ENCODE measurements at regions of chr6 and their contacts with region 1.

Region 1: DNA sequence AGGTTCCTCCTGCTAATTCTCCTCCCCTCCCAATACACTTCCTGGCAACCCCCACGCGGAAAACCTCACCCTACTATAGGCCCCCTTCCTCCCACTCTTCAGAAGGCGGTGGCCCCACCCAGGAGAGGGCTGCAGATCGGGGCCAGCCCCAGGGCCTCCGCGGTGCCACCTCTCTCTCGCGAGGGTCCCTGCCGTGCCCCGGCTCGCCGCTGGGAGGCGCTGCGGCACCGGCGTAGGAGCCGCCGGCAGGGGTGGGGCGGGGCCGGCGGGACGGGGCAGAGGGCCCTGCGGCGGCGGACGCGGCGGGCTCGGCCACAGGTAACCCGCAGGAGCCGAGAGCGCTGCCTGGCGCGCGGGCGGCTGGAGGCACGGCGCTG is at the start of gene ANKRD6:
- DNase-seq: peak; percentile 93
- H3K4me3 Mint-ChIP-seq: peak within 1 kb of the TSS; percentile 77
- H3K27ac Mint-ChIP-seq: no peak within 1 kb of the TSS
- H3K4me1 Mint-ChIP-seq: peaks cover 17% of the 10 kb centered on the region
- H3K27me3 Mint-ChIP-seq: peaks cover 10% of the 10 kb centered on the region
- CTCF ChIP-seq: peak; percentile 93
- total RNA-seq, gene ANKRD6: 14.7 and 18.0 TPM in 2 replicates

Region 2: DNA sequence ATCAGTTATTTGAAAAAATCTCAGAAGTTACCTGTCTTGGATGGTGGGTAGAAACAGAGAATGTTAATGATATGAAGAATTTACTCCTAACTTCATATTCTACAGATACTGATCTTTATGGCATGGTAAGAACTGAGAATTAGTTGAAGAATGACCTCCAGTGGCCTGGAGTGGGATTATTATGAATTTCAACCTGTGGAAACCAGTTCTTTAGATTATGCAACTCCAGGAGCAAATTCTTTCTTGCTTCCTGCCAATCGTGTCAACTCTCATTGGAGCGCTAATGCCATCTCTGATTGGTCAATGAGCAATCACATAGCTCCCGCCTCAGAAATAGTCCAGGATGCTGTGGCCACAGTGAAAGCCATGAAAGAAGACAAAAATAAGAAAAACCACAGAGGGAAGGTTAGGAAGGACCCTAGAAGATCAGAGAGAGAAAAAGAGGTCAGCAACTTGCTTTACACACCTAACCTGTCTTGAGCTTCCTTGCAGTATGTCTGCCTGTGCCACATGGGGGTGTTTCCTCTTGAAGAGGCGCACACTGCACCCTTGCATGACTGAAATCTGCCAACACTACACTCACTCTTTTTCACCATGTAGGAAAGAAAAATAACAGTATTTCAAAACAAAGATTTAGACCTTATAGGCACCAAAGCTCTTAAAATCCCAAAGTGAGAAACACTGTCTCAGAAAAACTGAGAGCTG is 165.3 kb after region 1 on chr6:
- CTCF ChIA-PET with region 1: interaction called, 5 read pairs
- intact Hi-C with region 1: loop called (anchors 5 kb)
- DNase-seq: peak; percentile 49
- H3K4me3 Mint-ChIP-seq: peak overlapping the region; percentile 5
- H3K27ac Mint-ChIP-seq: peak overlapping the region; percentile 14
- H3K4me1 Mint-ChIP-seq: no peaks in the 10 kb centered on the region
- H3K27me3 Mint-ChIP-seq: no peaks in the 10 kb centered on the region
- CTCF ChIP-seq: no peak

Region 3: DNA sequence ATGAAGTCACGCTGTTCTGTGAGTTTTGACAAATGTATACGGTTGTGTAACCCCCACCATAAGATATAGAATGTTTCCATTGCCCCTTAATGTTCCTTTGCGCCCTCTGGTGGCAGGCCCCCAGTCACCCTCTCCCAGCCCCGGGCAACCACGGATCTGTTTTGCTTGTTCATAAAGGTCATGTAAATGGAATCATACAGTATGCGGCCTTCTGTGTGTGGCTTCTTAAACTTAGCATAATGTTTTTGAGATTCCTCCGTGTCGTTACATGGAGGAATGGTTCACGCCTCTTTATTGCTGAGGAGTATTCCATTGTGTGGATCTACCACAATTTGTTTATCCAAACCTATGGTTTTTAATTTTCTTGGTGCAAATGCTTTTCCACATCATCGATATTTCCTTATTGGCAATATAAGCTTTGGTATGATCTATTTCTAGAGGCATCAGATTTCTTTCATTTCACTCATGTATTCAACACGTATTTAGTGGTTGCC is 177.3 kb after region 1 on chr6:
- CTCF ChIA-PET with region 1: interaction called, 7 read pairs
- intact Hi-C with region 1: loop called (anchors 1 kb)
- DNase-seq: peak; percentile 85
- H3K4me3 Mint-ChIP-seq: no peak overlapping the region
- H3K27ac Mint-ChIP-seq: no peak overlapping the region
- H3K4me1 Mint-ChIP-seq: no peaks in the 10 kb centered on the region
- H3K27me3 Mint-ChIP-seq: no peaks in the 10 kb centered on the region
- CTCF ChIP-seq: peak; percentile 73

Region 4: DNA sequence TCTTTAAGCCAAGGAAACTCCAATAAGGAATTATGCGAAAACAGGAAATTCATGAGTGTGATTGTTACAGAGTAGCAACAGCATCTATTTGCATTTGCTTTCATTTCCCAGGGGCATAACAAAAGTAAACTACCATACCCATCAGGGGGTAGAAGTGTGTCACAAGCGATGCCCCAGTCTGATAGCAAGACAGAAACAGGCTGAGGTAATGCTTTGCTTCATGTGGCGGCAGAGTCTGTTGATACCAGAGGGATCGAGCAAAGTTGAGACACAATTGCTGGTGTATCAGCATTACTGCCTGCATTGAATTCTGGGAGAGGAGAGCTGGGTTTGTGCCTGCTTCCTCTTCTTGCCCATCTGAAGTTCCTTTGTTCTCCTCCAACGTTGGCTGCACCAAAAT is 256.9 kb after region 1 on chr6:
- CTCF ChIA-PET with region 1: no interaction called
- intact Hi-C with region 1: no loop called
- DNase-seq: no peak
- H3K4me3 Mint-ChIP-seq: no peak overlapping the region
- H3K27ac Mint-ChIP-seq: no peak overlapping the region
- H3K4me1 Mint-ChIP-seq: no peaks in the 10 kb centered on the region
- H3K27me3 Mint-ChIP-seq: no peaks in the 10 kb centered on the region
- CTCF ChIP-seq: no peak